GM12878 (cell line): ENCODE measurements at regions of chr15 and their contacts with region 1.

Region 1: DNA sequence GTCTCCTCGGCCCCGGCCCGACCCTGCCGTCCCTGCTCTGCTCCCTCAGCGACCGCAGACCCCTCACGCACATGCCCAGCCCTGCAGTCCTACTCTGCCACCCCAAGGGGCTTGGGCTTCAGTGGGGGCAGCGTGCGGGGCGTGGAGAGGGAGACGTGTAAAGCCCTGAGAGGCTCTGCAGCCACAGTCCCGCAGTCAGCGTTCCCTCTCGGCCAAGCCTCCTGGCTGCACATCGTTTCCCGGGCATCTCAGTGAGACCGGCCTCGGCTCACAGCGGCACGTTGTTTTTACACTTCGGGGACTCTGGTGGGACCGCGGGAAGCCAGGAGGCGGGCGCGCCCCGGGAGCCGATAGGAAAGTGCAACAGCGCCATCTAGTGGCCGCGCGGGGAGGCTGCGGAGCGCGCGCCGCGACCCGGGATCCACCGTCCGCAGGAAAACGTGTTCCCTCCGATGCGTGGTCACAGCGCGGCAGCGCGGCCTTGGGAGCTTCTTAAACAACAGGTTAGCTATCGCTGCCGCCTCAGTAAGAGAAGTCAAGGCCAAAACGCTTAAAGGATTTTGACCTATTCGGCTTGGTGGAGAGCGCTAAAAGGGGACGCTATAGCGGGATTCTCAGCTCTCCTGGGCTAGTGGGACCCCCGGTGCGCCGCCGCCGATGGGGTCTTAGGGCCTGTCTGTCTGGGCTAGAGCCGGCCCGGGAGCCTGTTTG is 226.8 kb upstream of the IGF1R start:
- DNase-seq: no peak
- ATAC-seq: peak; percentile 95
- H3K4me3 ChIP-seq: no peak overlapping the region
- H3K27ac ChIP-seq: no peak overlapping the region
- H3K4me1 ChIP-seq: no peaks in the 10 kb centered on the region
- H3K27me3 ChIP-seq: peaks cover 0 to 6% of the 10 kb centered on the region in 2 experiments; a peak in 3 of 4 replicates
- CTCF ChIP-seq: peak; percentile 83 to 94 (median 87)
- EP300 ChIP-seq: no peak
- POLR2A ChIP-seq: no peak
- RAD21 ChIP-seq: peak; percentile 77

Region 2: DNA sequence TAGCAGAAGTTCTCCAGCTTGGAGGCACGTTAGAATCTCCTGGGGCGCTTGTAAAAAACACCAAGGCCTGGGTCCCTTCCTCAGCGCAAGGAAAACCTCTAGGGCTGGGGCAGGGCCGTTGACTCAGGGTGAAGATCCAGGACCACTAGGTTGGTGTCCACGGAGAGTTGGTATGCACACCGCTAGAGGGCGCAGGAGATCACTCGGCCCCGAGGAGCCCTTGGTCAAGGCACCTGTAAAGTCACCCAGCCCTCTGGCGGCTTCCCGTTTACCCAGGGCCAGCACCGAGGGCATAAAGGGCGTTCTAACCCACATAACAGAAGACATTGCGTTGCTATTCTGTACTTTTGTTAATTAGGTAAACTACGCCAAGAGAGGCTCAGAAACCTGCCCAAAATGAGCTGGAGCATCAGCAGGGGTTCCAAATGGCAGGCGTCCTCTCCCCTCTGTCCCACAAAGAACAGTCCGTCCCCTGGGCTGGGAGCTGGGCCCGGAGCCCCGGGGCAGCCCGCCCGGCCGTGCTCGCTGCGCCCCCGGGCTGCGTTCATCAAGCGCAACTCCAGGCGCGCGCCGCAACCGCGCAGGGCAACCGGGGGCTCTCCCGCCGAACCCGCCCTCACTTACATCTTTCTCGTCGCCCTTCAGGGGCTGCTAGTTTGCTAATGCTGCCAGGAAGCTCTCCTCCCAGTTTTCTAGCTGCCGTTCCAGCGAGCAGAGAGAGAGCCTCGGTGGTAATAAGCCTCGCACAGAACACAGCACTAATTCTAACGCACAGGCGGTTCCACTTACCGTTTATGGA is 128.9 kb before region 1 on chr15:
- CTCF ChIA-PET with region 1: no interaction called
- POLR2A ChIA-PET with region 1: no interaction called
- RAD21 ChIA-PET with region 1: no interaction called
- SMC1A ChIA-PET with region 1: no interaction called
- in situ Hi-C with region 1: no loop called
- intact Hi-C with region 1: loop called (anchors 5 kb)
- DNase-seq: no peak
- ATAC-seq: peak; percentile 94
- H3K4me3 ChIP-seq: no peak overlapping the region
- H3K27ac ChIP-seq: no peak overlapping the region
- H3K4me1 ChIP-seq: no peaks in the 10 kb centered on the region
- H3K27me3 ChIP-seq: no peaks in the 10 kb centered on the region
- CTCF ChIP-seq: peak; percentile 57 to 86 (median 60)
- EP300 ChIP-seq: no peak
- POLR2A ChIP-seq: no peak
- RAD21 ChIP-seq: 0 out of 2 replicates have a peak, but pooled peaks have one; percentile 4

Region 3: DNA sequence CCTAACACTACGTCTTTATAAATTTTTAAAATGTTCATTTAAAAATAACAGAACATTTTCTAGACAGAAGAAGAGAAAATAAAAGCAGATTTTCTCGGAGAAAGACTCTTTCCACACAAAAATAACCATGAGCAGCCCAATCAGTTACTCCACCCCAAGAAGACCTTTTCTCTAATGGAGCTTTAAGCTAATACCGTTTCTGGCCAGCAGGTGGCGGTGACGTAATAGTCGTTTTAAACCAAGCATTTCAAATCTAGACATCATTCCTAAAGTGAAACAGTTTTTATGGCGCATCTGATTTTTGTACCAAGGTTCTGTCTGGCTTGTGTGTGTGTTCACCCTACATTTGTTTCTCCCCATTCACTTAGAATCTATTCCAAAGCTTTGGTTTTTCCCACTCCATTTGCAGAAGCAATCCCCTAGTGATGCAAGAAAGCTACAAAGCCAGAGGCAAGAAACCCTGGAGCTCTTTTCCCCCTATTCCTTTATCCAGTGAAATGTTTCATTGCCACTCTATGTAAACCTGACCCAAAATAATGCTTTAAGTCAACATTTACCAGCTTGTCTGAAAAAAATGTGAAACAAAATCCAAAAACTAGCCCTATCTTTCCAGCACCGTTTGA is 109.9 kb before region 1 on chr15:
- CTCF ChIA-PET with region 1: interaction called, 56 read pairs
- POLR2A ChIA-PET with region 1: no interaction called
- RAD21 ChIA-PET with region 1: interaction called, 15 read pairs
- SMC1A ChIA-PET with region 1: interaction called, 8 read pairs
- in situ Hi-C with region 1: loop called (anchors 5 kb)
- intact Hi-C with region 1: loop called (anchors 1 kb)
- DNase-seq: peak; percentile 9
- ATAC-seq: peak; percentile 66
- H3K4me3 ChIP-seq: no peak overlapping the region
- H3K27ac ChIP-seq: no peak overlapping the region
- H3K4me1 ChIP-seq: no peaks in the 10 kb centered on the region
- H3K27me3 ChIP-seq: no peaks in the 10 kb centered on the region
- CTCF ChIP-seq: peak; percentile 67 to 78 (median 74)
- EP300 ChIP-seq: no peak
- POLR2A ChIP-seq: no peak
- RAD21 ChIP-seq: peak; percentile 62